ENCODE measurements at regions of chr17 and their contacts with region 1.

Region 1: GRCh38 chr17:41966463-41967140 is at the start of gene CNP:
- DNase-seq: peak; percentile 93 to 95
- ATAC-seq: peak; percentile 89 to 93 (median 91)
- H3K4me3 ChIP-seq: peak within 1 kb of the TSS; percentile 82
- H3K27ac ChIP-seq: peak within 1 kb of the TSS; percentile 89
- H3K4me1 ChIP-seq: peaks cover 32% of the 10 kb centered on the region
- H3K27me3 ChIP-seq: no peaks in the 10 kb centered on the region
- CTCF ChIP-seq: no peak
- total RNA-seq, gene CNP: 21.0 to 26.8 (median 22.9) TPM

Region 2: GRCh38 chr17:42019509-42020404 is 53.2 kb after region 1 on chr17 and contains the start of gene NKIRAS2:
- intact Hi-C with region 1: loop called (anchors 2 to 5 kb)
- DNase-seq: peak; percentile 94 to 97
- ATAC-seq: peak; percentile 77 to 83 (median 81)
- H3K4me3 ChIP-seq: peak within 1 kb of the TSS; percentile 94
- H3K27ac ChIP-seq: peak within 1 kb of the TSS; percentile 94
- H3K4me1 ChIP-seq: peaks cover 37% of the 10 kb centered on the region
- H3K27me3 ChIP-seq: no peaks in the 10 kb centered on the region
- CTCF ChIP-seq: peak; percentile 93
- total RNA-seq, gene NKIRAS2: 35.0 to 46.8 (median 39.4) TPM

Region 3: DNA sequence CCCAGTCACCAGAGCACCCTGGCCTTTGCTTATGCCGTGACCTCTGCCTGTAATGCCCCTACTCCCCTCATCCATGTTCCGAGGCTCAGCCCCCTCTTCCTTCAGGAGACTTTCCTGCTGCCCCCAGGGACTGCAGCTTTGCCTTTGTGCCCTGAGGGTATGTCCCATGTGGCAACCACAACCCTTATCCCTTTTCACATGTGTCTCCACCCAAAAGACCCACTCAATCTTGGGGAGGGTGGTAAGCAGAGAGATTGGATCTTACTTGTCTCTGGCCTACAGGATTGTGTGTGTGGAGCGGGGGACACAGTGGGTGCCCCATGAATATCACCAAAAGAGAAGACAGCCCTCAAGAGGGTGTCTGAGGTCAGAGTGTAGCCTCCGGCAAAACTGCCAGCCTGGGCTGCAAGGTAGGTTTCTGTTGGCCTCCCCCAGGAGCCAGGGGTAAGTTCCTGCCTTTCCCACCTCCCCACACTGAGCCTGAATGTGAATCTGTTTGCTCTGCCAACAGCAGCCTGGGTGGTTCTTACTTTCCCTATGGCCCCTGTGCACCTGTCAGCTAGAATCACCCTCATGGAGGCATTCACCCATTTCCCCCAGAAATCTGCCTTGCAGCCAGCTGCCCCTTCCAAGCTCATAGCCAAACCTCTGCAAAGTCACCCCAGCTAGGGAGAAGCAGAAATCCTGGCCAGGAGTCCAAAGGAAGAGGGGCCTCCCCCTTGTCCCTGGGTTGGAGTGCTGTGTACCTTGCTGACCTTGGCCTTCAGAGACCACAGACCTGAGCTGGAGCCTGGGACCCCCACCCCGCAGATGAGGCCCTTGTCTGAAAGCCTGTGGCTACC is 95.3 kb after region 1 on chr17:
- intact Hi-C with region 1: loop called in 1 of 2 experiments (anchors 1 kb)
- DNase-seq: no peak
- ATAC-seq: no peak
- H3K4me3 ChIP-seq: no peak overlapping the region
- H3K27ac ChIP-seq: no peak overlapping the region
- H3K4me1 ChIP-seq: peaks cover 10% of the 10 kb centered on the region
- H3K27me3 ChIP-seq: no peaks in the 10 kb centered on the region
- CTCF ChIP-seq: no peak

Region 4: DNA sequence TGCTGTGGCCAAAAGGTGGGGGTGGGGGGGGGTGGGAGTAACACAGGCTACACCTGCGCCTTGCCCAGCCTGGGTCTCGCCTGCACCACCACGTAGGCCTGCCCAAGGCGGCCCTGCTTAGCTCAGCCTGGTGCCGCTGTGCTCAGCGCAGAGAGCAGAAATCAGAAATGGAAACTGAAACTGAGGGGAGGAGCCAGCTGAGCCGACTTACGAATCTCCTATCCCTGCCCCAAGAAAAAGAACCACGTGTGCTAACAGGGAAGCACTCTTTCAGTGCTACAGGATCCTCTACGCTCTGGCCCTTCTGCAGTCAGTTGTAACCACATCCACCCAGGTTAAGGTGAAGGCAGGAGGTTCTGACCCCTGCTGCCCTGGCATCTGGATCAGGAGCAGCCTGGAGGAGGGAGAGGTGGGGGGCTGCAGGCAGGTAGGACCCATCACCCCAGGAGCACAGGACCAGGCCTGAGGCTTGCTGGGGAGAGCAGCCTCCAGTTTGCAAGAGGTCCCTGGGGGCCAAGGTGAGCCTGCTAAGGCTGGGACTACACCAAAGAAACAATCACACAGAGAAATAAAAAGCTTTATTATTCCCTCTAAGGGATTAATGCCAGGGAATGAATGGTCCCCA is 146.1 kb after region 1 on chr17 and contains the start of gene DHX58:
- intact Hi-C with region 1: loop called (anchors 2 to 5 kb)
- DNase-seq: peak; percentile 63 to 81
- ATAC-seq: peak; percentile 53 to 85 (median 73)
- H3K4me3 ChIP-seq: peak within 1 kb of the TSS; percentile 73
- H3K27ac ChIP-seq: peak within 1 kb of the TSS; percentile 85
- H3K4me1 ChIP-seq: peaks cover 21% of the 10 kb centered on the region
- H3K27me3 ChIP-seq: no peaks in the 10 kb centered on the region
- CTCF ChIP-seq: no peak
- total RNA-seq, gene DHX58: 2.0 to 4.2 (median 3.1) TPM

Region 5: GRCh38 chr17:42155636-42156045 is 189.0 kb after region 1 on chr17:
- intact Hi-C with region 1: loop called in 1 of 2 experiments (anchors 1 kb)
- DNase-seq: no peak
- ATAC-seq: no peak
- H3K4me3 ChIP-seq: peak overlapping the region; percentile 100
- H3K27ac ChIP-seq: peak overlapping the region; percentile 97
- H3K4me1 ChIP-seq: peaks cover 26% of the 10 kb centered on the region
- H3K27me3 ChIP-seq: no peaks in the 10 kb centered on the region
- CTCF ChIP-seq: no peak

Measured in psoas muscle (tissue), 8 donors.